ENCODE measurements at regions of chr16 and their contacts with region 1.

Region 1: GRCh38 chr16:27154705-27155521 is 48.4 kb upstream of the KDM8 start:
- DNase-seq: peak; percentile 41

Region 2: DNA sequence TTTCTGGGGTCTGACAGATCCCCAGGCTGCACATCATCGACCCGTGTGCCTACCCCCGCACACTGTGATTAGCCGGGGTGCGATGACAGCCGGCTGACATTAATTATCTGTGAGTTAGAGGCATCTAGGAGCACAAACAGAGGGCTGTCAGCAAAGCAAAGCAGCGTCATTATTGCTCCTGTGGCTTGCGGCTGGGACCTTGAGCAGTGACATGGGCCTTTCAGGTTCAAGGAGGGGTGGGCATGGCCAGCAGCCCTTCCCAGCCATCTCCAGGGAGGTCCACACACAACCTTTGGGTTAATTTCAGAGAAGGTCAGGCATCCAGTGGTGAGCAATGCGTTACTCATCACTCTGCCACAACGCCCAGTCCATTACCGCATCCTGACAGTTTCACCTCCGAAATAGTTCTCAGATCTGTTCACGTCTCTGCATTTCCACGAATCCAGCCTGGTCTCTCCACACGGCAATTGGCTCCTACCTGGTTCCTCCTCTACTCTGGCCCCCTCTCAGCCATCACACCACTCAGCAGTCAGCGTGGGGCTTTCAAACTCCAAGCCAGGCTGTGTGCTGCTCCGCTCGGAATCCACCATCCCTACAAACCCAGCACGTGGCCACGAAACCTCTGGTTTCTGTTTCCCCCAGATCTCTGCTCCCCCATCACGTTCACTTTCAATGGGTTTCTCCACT is 337.9 kb before region 1 on chr16:
- in situ Hi-C with region 1: no loop called
- DNase-seq: peak; percentile 46

Region 3: GRCh38 chr16:27374804-27375425 is 220.0 kb after region 1 on chr16:
- in situ Hi-C with region 1: loop called (anchors 25 kb)
- DNase-seq: peak; percentile 93

Measured in ACHN (cell line).